Activated CD8-positive, alpha-beta T cell treated with anti-CD3 and anti-CD28 coated beads, Interleukin-2, amount 10 ng/mL, durations not matched to agents 7 days and 5 days (primary cell): ENCODE measurements at regions of chr17 and their contacts with region 1.

Region 1: GRCh38 chr17:38415250-38416194 is 12.7 kb upstream of the ARHGAP23 start:
- DNase-seq: peak; percentile 36
- ATAC-seq: peak; percentile 41
- H3K4me3 Mint-ChIP-seq: peak overlapping the region; percentile 56
- H3K27ac Mint-ChIP-seq: peak overlapping the region; percentile 83
- H3K4me1 Mint-ChIP-seq: peaks cover 20% of the 10 kb centered on the region
- H3K27me3 Mint-ChIP-seq: peaks cover 27% of the 10 kb centered on the region

Region 2: GRCh38 chr17:38322091-38322779 is 93.3 kb before region 1 on chr17:
- CTCF ChIA-PET with region 1: interaction called, 15 read pairs
- POLR2A ChIA-PET with region 1: no interaction called
- DNase-seq: peak; percentile 80
- ATAC-seq: peak; percentile 81
- H3K4me3 Mint-ChIP-seq: no peak overlapping the region
- H3K27ac Mint-ChIP-seq: no peak overlapping the region
- H3K4me1 Mint-ChIP-seq: peaks cover 10% of the 10 kb centered on the region
- H3K27me3 Mint-ChIP-seq: no peaks in the 10 kb centered on the region

Region 3: GRCh38 chr17:38333635-38334295 is 81.8 kb before region 1 on chr17:
- CTCF ChIA-PET with region 1: interaction called, 16 read pairs
- POLR2A ChIA-PET with region 1: interaction called, 3 read pairs
- DNase-seq: peak; percentile 66
- ATAC-seq: peak; percentile 71
- H3K4me3 Mint-ChIP-seq: no peak overlapping the region
- H3K27ac Mint-ChIP-seq: no peak overlapping the region
- H3K4me1 Mint-ChIP-seq: no peaks in the 10 kb centered on the region
- H3K27me3 Mint-ChIP-seq: no peaks in the 10 kb centered on the region

Region 4: DNA sequence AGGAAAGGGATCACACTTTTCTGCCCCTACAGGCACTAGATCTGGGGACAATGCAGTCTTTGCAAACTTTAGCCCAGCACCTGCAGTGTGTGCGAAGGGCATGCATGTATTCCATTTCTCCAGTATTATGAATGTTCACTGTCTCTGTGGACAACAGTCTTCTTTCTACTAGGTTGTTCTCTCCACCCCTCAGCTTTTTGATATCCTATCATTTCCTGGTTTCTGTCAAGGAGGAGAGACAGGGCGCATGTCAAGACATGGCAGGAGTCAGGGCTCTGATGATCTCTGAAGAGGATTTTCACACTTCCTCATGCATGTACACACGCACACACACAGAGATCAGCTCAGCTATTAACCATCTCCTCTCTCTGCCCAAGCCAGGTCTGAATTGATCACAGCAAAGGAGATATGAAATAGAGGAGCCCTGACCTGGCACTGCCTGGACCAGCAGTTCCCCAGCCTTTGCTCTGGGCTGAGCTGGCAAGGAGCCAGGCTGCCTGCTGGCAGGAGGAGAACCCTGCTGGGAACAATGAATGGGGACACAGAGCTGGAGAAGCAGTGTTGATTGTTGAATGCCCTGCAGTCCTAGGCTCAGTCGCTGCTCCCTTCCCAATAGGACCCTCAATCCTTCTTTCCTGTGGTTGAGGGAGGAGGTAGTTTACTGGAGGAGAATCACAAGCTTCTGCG is 74.3 kb before region 1 on chr17:
- CTCF ChIA-PET with region 1: interaction called, 10 read pairs
- POLR2A ChIA-PET with region 1: interaction called, 3 read pairs
- DNase-seq: no peak
- ATAC-seq: no peak
- H3K4me3 Mint-ChIP-seq: no peak overlapping the region
- H3K27ac Mint-ChIP-seq: no peak overlapping the region
- H3K4me1 Mint-ChIP-seq: no peaks in the 10 kb centered on the region
- H3K27me3 Mint-ChIP-seq: peaks cover 2% of the 10 kb centered on the region